ENCODE measurements at regions of chr18 and their contacts with region 1.

Region 1: DNA sequence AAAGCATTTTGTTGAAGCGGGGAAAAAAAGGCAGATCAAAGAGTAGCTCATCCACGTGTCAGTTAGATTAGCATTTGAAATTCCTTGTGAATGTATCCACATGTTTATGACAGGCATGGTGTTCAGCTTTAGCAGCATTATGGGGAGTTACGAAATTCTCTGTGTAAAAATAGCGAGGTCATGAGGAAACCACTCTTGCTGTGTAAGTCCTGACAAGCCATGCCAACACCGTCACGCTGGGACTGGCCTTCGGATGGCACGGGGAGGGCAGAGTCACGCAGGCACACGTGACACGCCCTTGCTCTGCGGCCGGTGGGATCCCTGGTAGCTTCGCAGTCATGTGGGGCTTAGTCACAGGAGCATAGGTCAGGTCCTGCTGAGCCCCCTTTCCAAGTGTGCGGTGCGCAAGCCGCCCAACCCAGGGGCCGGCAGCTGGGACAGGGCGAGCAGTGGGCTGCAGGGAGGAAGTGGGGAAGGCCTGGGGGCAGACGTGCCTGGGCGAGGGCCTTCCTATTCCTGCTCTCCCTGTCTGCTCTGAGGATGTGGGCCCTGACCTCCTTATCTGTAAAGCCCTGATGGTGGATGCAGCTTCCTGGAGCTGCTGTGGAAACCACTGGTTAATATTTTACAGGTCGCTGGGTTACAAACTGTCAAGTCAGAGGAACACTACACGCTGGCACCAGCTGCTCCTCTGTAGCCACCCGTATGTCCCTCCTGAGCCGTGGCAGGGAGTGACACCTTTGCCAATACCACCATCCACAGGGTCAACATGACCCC is 18.0 kb downstream of the MBP start:
- DNase-seq: peak; percentile 84
- ATAC-seq: peak; percentile 87

Region 2: GRCh38 chr18:76274468-76275289 is 839.9 kb before region 1 on chr18:
- intact Hi-C with region 1: loop called (anchors 5 kb)
- DNase-seq: no peak
- ATAC-seq: peak; percentile 67

Measured in sciatic nerve (tissue), 2 donors.